ENCODE measurements at regions of chr1 and their contacts with region 1.

Region 1: GRCh38 chr1:10209905-10210810 is at the start of gene KIF1B:
- DNase-seq: peak; percentile 96
- ATAC-seq: peak; percentile 94 to 97
- H3K4me3 ChIP-seq: peak within 1 kb of the TSS; percentile 98
- H3K27ac ChIP-seq: peak within 1 kb of the TSS; percentile 91 to 95
- H3K4me1 ChIP-seq: peaks cover 17% of the 10 kb centered on the region; the same call in 2 of the 3 replicates
- CTCF ChIP-seq: peak; percentile 84
- EP300 ChIP-seq: no peak
- POLR2A ChIP-seq: peak; percentile 79
- RAD21 ChIP-seq: peak; percentile 33 to 70; a peak in 4 of 5 replicates
- polyA plus RNA-seq, gene KIF1B: 18.3 and 22.8 TPM in 2 replicates

Region 2: GRCh38 chr1:10195570-10195969 is 14.6 kb before region 1 on chr1:
- CTCF ChIA-PET with region 1: interaction called, 34 read pairs
- POLR2A ChIA-PET with region 1: interaction called, 4 read pairs
- DNase-seq: peak in 1 of 2 experiments; percentile 37
- ATAC-seq: peak in 1 of 2 experiments; percentile 24; a peak in 2 of 6 replicates
- H3K4me3 ChIP-seq: no peak overlapping the region
- H3K27ac ChIP-seq: no peak overlapping the region; a peak in 1 of 6 replicates
- H3K4me1 ChIP-seq: peaks cover 7% of the 10 kb centered on the region; the same call in 2 of the 3 replicates
- CTCF ChIP-seq: no peak
- EP300 ChIP-seq: no peak
- POLR2A ChIP-seq: no peak
- RAD21 ChIP-seq: no peak

Region 3: DNA sequence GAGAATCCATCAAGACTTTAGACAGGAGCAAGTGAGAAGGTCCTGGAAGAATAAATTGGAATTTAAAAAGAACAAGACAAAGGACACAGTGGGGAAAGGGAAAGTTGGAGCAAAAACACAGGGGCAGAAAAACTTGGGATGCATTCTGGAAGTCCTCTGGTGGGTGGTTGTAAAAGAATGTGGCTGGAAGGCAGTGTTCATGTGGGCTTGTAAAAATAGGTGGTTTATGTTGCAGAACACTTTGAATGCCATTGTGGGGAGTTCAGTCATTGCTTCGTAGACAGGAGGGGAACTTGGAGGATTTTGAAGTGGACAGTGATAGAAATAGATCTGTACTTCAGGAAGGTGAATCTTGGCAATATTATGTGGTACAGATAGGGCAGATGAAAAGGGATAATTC is 15.4 kb after region 1 on chr1:
- CTCF ChIA-PET with region 1: interaction called, 30 read pairs
- POLR2A ChIA-PET with region 1: no interaction called
- DNase-seq: no peak
- ATAC-seq: no peak
- H3K4me3 ChIP-seq: no peak overlapping the region
- H3K27ac ChIP-seq: no peak overlapping the region
- H3K4me1 ChIP-seq: no peaks in the 10 kb centered on the region
- CTCF ChIP-seq: no peak
- EP300 ChIP-seq: no peak
- POLR2A ChIP-seq: no peak
- RAD21 ChIP-seq: no peak

Region 4: DNA sequence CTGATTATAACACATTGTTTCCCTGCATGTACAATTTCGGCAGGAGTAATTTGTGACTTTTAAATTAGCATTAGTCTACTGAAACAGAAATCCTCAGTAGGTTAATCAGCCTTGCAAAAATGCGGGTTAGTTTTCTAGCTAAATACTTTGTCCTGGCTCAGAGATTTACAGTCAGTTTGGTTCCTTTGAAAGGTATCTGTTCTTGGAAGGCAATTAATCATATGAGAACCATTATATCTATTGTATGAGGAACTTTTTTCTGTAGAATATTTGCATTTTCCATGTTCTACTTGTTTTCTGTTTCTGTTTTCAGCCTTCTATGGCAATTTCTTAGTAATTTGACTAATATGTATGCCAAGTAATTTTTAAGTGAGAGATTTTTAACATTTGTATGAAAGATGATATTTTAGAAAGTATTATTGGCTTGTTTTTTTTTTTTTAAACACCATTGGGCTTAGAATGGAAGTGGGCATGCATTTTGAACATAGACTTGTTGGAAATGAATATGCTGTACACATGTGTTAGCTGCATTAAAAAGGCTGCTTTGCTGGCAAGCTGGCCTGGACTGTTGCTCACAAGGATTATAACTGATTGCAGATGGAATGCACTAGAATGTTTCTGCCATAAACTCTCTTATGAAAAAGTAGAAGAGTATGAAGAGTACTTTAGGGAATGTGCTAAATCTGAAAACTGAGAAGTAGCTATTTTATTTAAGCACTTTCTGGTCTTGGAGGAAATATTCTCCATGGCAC is 26.4 kb after region 1 on chr1:
- CTCF ChIA-PET with region 1: interaction called, 11 read pairs
- POLR2A ChIA-PET with region 1: no interaction called
- DNase-seq: no peak
- ATAC-seq: no peak
- H3K4me3 ChIP-seq: no peak overlapping the region
- H3K27ac ChIP-seq: no peak overlapping the region
- H3K4me1 ChIP-seq: no peaks in the 10 kb centered on the region
- CTCF ChIP-seq: no peak
- EP300 ChIP-seq: no peak
- POLR2A ChIP-seq: no peak
- RAD21 ChIP-seq: no peak

Region 5: GRCh38 chr1:10253755-10254154 is 43.6 kb after region 1 on chr1:
- CTCF ChIA-PET with region 1: interaction called, 12 read pairs
- POLR2A ChIA-PET with region 1: interaction called, 3 read pairs
- DNase-seq: peak; percentile 12 to 35
- ATAC-seq: peak; percentile 77 to 80
- H3K4me3 ChIP-seq: no peak overlapping the region
- H3K27ac ChIP-seq: no peak overlapping the region
- H3K4me1 ChIP-seq: peaks cover 21% of the 10 kb centered on the region
- CTCF ChIP-seq: no peak
- EP300 ChIP-seq: no peak
- POLR2A ChIP-seq: no peak
- RAD21 ChIP-seq: no peak

Region 6: DNA sequence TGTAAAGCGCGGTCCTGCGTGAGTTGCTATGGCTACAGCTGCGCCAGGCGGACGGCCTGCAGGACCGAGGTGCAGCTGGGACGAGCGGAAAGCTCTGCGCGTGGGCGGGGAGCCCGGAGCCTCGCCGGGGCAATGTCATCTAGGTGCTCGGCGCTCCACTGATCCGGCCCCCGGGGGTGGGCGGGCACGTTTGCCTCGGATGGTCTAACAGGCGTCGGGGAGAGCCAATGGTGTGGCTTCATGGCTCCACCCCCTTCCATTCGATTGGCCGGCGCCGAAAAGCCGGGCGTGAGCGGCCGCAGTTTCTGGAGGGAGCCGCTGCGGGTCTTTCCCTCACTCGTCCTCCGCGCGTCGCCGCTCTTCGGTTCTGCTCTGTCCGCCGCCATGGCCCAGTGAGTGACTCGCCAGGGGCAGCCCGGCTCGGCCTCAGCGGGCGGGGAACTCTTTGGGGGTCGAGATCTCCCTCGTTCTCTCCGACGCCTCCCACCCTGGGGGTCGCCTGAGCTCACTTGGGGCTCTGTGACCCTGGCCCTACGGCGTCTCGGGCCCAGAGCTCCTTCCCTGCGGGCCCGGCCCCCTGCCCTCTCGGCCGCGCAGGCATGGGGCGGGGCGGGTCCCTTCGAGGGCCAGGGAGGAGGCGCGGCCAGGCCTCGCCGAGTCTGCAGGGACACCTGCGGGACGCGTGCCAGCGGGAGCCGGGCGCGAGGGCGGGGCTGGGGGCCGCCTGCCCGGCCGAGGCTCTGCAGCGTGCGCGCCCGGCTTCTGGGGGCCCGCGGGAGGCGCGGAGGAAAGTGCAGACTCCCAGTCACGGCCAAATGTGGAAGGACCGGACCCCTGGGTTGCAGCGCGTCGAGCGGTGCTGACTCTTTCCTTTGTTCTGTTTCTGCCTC is 188.8 kb after region 1 on chr1 and contains the start of gene PGD:
- CTCF ChIA-PET with region 1: no interaction called
- POLR2A ChIA-PET with region 1: no interaction called
- DNase-seq: peak; percentile 88 to 97
- ATAC-seq: peak; percentile 93
- H3K4me3 ChIP-seq: peak within 1 kb of the TSS; percentile 89
- H3K27ac ChIP-seq: peak within 1 kb of the TSS; percentile 95 to 99
- H3K4me1 ChIP-seq: peaks cover 13% of the 10 kb centered on the region
- CTCF ChIP-seq: no peak
- EP300 ChIP-seq: no peak
- POLR2A ChIP-seq: peak; percentile 50
- RAD21 ChIP-seq: no peak
- polyA plus RNA-seq, gene PGD: 700 and 1,019 TPM in 2 replicates

Measured in A549 (cell line).